Activated CD8-positive, alpha-beta T cell treated with anti-CD3 and anti-CD28 coated beads, Interleukin-2, amount 10 ng/mL, durations not matched to agents 7 days and 5 days (primary cell): ENCODE measurements at regions of chr14 and their contacts with region 1.

Region 1: GRCh38 chr14:49852301-49853157 is at the start of gene NEMF:
- DNase-seq: peak; percentile 91
- ATAC-seq: peak; percentile 84
- H3K4me3 Mint-ChIP-seq: peak within 1 kb of the TSS; percentile 97
- H3K27ac Mint-ChIP-seq: peak within 1 kb of the TSS; percentile 98
- H3K4me1 Mint-ChIP-seq: peaks cover 41% of the 10 kb centered on the region
- H3K27me3 Mint-ChIP-seq: no peaks in the 10 kb centered on the region
- total RNA-seq, gene NEMF: 75.6 to 78.9 TPM

Region 2: GRCh38 chr14:49633640-49634546 is 218.6 kb before region 1 on chr14:
- CTCF ChIA-PET with region 1: interaction called, 51 read pairs
- POLR2A ChIA-PET with region 1: interaction called, 9 read pairs
- DNase-seq: peak; percentile 96
- ATAC-seq: peak; percentile 82
- H3K4me3 Mint-ChIP-seq: peak overlapping the region; percentile 86
- H3K27ac Mint-ChIP-seq: peak overlapping the region; percentile 97
- H3K4me1 Mint-ChIP-seq: peaks cover 49% of the 10 kb centered on the region
- H3K27me3 Mint-ChIP-seq: no peaks in the 10 kb centered on the region

Region 3: DNA sequence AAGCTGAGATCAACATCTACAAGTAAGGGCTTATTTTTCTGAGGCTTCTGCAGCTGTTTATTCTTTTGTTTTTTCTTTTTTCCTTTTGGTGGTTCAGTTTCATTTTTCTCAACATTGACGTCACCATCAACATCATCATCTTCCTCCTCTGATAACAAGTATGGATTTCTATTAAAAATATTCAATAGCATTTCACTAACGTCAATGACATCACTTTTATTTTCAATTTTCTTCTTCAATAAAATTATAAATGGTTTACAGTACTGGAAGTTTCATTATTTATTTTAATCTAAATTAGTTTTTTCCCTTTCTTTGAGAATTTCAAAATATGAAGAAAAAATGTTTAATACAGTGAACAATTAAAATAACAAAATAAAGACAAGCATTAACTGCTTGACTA is 23.9 kb before region 1 on chr14:
- CTCF ChIA-PET with region 1: interaction called, 25 read pairs
- POLR2A ChIA-PET with region 1: no interaction called
- DNase-seq: no peak
- ATAC-seq: no peak
- H3K4me3 Mint-ChIP-seq: no peak overlapping the region
- H3K27ac Mint-ChIP-seq: no peak overlapping the region
- H3K4me1 Mint-ChIP-seq: peaks cover 4% of the 10 kb centered on the region
- H3K27me3 Mint-ChIP-seq: no peaks in the 10 kb centered on the region

Region 4: DNA sequence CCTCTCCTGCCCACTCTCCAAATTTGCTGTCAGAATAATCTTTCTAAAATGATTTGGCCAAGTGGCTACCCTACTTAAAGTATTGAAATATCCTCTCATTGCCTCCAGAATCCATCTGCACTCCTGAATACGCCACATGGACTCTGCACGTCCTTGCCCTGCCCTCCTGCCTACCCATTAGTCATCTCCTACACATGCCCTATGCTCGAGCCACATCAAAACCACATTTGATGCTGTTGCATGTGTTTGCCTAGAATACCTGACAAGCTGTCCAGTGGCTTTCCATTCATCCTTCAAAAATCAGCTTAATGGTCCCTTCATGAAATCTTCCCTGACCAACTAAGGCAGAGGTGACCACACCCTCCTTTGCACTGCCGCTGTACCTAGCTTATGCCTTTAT is 246.8 kb after region 1 on chr14:
- CTCF ChIA-PET with region 1: interaction called, 64 read pairs
- POLR2A ChIA-PET with region 1: interaction called, 6 read pairs
- DNase-seq: no peak
- ATAC-seq: no peak
- H3K4me3 Mint-ChIP-seq: no peak overlapping the region
- H3K27ac Mint-ChIP-seq: peak overlapping the region; percentile 33
- H3K4me1 Mint-ChIP-seq: peaks cover 85% of the 10 kb centered on the region
- H3K27me3 Mint-ChIP-seq: no peaks in the 10 kb centered on the region

Region 5: GRCh38 chr14:50116181-50116956 is 263.8 kb after region 1 on chr14 and contains the start of gene VCPKMT:
- CTCF ChIA-PET with region 1: interaction called, 23 read pairs
- POLR2A ChIA-PET with region 1: interaction called, 15 read pairs
- DNase-seq: peak; percentile 96
- ATAC-seq: peak; percentile 99
- H3K4me3 Mint-ChIP-seq: peak within 1 kb of the TSS; percentile 98
- H3K27ac Mint-ChIP-seq: peak within 1 kb of the TSS; percentile 99
- H3K4me1 Mint-ChIP-seq: peaks cover 36% of the 10 kb centered on the region
- H3K27me3 Mint-ChIP-seq: no peaks in the 10 kb centered on the region
- total RNA-seq, gene VCPKMT: 12.4 to 13.0 TPM